ENCODE measurements at regions of chr2 and their contacts with region 1.

Region 1: DNA sequence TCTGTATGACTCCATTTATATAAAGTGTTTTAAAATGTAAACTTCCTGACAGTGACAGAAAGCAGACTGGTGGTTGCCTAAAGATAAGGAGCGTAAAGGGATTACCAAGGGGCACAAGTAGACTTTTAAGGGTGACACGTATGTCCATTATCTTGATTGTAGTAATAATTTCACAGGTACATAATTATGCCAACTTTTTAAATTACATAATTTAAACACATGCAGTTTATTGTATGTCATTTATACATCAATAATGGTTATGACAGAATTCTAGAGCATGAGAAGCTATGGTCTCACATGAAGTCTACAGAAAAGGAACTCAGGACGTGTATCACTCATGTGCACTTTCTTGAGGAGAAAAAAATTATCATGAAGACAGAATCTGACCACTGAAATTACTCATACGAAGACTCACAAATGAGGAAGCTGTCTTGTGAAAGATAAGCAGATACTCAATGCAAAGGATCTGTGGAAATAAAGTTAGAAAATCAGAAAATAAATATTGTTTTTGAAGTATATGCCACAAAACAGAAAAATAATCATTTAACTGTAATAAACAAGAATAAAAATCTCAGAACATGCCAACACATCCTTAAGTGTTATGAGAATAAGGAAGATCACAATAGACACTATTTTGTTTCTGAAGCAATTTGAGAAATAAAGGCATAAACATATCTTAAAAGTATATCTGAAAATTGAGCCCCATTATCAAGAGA is 84.4 kb downstream of the TMEM131 start:
- DNase-seq: no peak
- H3K4me3 Mint-ChIP-seq: no peak overlapping the region
- H3K27ac Mint-ChIP-seq: peak overlapping the region; percentile 22
- H3K4me1 Mint-ChIP-seq: peaks cover 61% of the 10 kb centered on the region
- H3K27me3 Mint-ChIP-seq: no peaks in the 10 kb centered on the region

Region 2: GRCh38 chr2:97870396-97870843 is 40.9 kb before region 1 on chr2:
- intact Hi-C with region 1: loop called (anchors 1 kb)
- DNase-seq: peak; percentile 68
- H3K4me3 Mint-ChIP-seq: peak overlapping the region; percentile 48
- H3K27ac Mint-ChIP-seq: peak overlapping the region; percentile 37
- H3K4me1 Mint-ChIP-seq: peaks cover 30% of the 10 kb centered on the region
- H3K27me3 Mint-ChIP-seq: no peaks in the 10 kb centered on the region

Region 3: GRCh38 chr2:97966518-97967215 is 55.3 kb after region 1 on chr2:
- intact Hi-C with region 1: loop called (anchors 2 kb)
- DNase-seq: no peak
- H3K4me3 Mint-ChIP-seq: no peak overlapping the region
- H3K27ac Mint-ChIP-seq: no peak overlapping the region
- H3K4me1 Mint-ChIP-seq: peaks cover 56% of the 10 kb centered on the region
- H3K27me3 Mint-ChIP-seq: no peaks in the 10 kb centered on the region

Region 4: GRCh38 chr2:98134172-98135005 is 223.0 kb after region 1 on chr2:
- intact Hi-C with region 1: loop called (anchors 5 kb)
- DNase-seq: peak; percentile 13
- H3K4me3 Mint-ChIP-seq: no peak overlapping the region
- H3K27ac Mint-ChIP-seq: peak overlapping the region; percentile 52
- H3K4me1 Mint-ChIP-seq: peaks cover 20% of the 10 kb centered on the region
- H3K27me3 Mint-ChIP-seq: no peaks in the 10 kb centered on the region